CD14-positive monocyte (primary cell): ENCODE measurements at regions of chr17 and their contacts with region 1.

Region 1: DNA sequence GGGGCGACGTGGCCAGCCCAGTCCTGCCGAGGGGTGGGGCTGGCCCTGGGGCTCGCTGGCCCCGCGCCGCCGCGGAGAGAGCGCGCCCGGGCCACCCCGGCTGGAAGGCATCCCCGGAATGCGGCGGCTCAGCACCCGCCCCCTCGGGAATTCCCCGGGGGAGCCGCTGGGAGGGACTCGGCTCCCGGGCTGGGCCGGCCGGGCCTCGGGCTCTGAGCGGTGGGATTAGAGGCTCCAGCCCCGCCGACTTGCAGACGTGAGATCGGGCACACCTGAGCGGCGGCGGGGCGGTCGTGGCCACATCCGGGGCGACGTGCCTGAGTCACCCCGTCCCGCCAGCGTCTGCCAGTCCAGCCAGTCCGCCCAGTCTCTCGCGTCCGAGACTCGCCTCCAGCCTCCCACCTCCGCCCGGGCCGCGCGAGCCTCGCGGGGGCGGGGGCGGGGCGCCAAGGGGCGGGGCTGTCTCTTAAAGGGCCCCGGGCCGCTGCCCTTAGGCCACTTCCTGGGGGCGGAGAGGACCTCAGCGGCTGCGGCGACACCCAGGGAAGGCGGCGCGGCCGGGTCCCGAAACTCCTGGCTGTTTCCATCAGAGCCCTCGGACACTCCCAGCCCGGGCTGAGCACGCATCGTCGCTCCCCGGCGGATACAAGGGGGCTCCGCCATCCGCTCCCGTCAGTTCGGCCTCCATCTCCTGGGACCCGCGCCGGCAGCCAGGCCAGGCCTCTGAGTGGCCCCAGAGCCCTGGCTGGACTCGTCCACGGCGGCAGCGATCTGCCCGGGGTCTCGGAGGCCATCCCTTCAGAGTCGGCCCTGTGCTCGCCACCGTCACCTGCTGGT is at the start of gene KCTD11:
- DNase-seq: peak; percentile 66 to 76 (median 74)
- H3K4me3 ChIP-seq: peak within 1 kb of the TSS; percentile 76 to 90 (median 88)
- H3K4me3 Mint-ChIP-seq: peak within 1 kb of the TSS; percentile 89 to 94
- H3K27ac ChIP-seq: peak within 1 kb of the TSS; percentile 55 to 81
- H3K27ac Mint-ChIP-seq: peak within 1 kb of the TSS; percentile 70 to 90 (median 87)
- H3K4me1 ChIP-seq: peaks cover 28 to 54% of the 10 kb centered on the region in 2 donors
- H3K4me1 Mint-ChIP-seq: peaks cover 40% of the 10 kb centered on the region
- H3K27me3 ChIP-seq: no peaks in the 10 kb centered on the region
- H3K27me3 Mint-ChIP-seq: peaks cover 3 to 5% (median 3%) of the 10 kb centered on the region in 3 donors
- CTCF ChIP-seq: peak; percentile 26
- polyA plus RNA-seq, gene KCTD11: 3.4 to 5.6 (median 3.6) TPM

Region 2: GRCh38 chr17:7081341-7082062 is 270.4 kb before region 1 on chr17:
- intact Hi-C with region 1: no loop called
- DNase-seq: no peak
- H3K4me3 ChIP-seq: no peak overlapping the region
- H3K4me3 Mint-ChIP-seq: no peak overlapping the region
- H3K27ac ChIP-seq: no peak overlapping the region
- H3K27ac Mint-ChIP-seq: peak overlapping the region in 3 of 7 donors; percentile 18 to 53 (median 36)
- H3K4me1 ChIP-seq: peaks cover 50 to 60% of the 10 kb centered on the region in 2 donors
- H3K4me1 Mint-ChIP-seq: peaks cover 63% of the 10 kb centered on the region
- H3K27me3 ChIP-seq: no peaks in the 10 kb centered on the region
- H3K27me3 Mint-ChIP-seq: peaks cover 1 to 8% (median 8%) of the 10 kb centered on the region in 3 donors
- CTCF ChIP-seq: no peak

Region 3: GRCh38 chr17:7394452-7395191 is 42.7 kb after region 1 on chr17 and contains the start of gene PLSCR3:
- intact Hi-C with region 1: loop called in 1 of 2 experiments (anchors 5 kb)
- DNase-seq: peak; percentile 69 to 73 (median 70)
- H3K4me3 ChIP-seq: peak within 1 kb of the TSS; percentile 61 to 94 (median 79)
- H3K4me3 Mint-ChIP-seq: peak within 1 kb of the TSS; percentile 86 to 95
- H3K27ac ChIP-seq: peak within 1 kb of the TSS; percentile 59 to 81
- H3K27ac Mint-ChIP-seq: peak within 1 kb of the TSS; percentile 83 to 95 (median 90)
- H3K4me1 ChIP-seq: peaks cover 15 to 19% of the 10 kb centered on the region in 2 donors
- H3K4me1 Mint-ChIP-seq: peaks cover 15% of the 10 kb centered on the region
- H3K27me3 ChIP-seq: no peaks in the 10 kb centered on the region
- H3K27me3 Mint-ChIP-seq: peaks cover 0 to 5% (median 3%) of the 10 kb centered on the region in 3 donors
- CTCF ChIP-seq: peak; percentile 21
- polyA plus RNA-seq, gene PLSCR3: 37.6 to 70.4 (median 45.7) TPM